Lower leg skin (tissue), 4 donors: ENCODE measurements at regions of chr4 and their contacts with region 1.

Region 1: GRCh38 chr4:140851032-140851636 is 94.9 kb upstream of the TBC1D9 start:
- DNase-seq: peak in 1 of 2 donors; percentile 42
- H3K4me3 ChIP-seq: no peak overlapping the region
- CTCF ChIP-seq: peak in 1 of 3 donors; percentile 45
- POLR2A ChIP-seq: no peak

Region 2: GRCh38 chr4:140609548-140610425 is 241.3 kb before region 1 on chr4:
- intact Hi-C with region 1: loop called (anchors 10 kb)
- DNase-seq: no peak
- H3K4me3 ChIP-seq: no peak overlapping the region
- CTCF ChIP-seq: no peak
- POLR2A ChIP-seq: no peak